ENCODE measurements at regions of chr16 and their contacts with region 1.

Region 1: GRCh38 chr16:2155091-2156021 is at the start of gene TRAF7:
- DNase-seq: peak; percentile 85 to 99 (median 98)
- ATAC-seq: peak; percentile 95
- H3K4me3 ChIP-seq: peak within 1 kb of the TSS; percentile 79
- H3K4me3 Mint-ChIP-seq: peak within 1 kb of the TSS; percentile 85 to 99 (median 94)
- H3K27ac ChIP-seq: peak within 1 kb of the TSS; percentile 80
- H3K27ac Mint-ChIP-seq: peak within 1 kb of the TSS; percentile 78 to 95 (median 91)
- H3K4me1 ChIP-seq: peaks cover 21 to 52% of the 10 kb centered on the region in 2 donors
- H3K4me1 Mint-ChIP-seq: peaks cover 20 to 59% (median 44%) of the 10 kb centered on the region in 7 donors
- H3K27me3 ChIP-seq: no peaks in the 10 kb centered on the region
- H3K27me3 Mint-ChIP-seq: no peaks in the 10 kb centered on the region
- total RNA-seq, gene TRAF7: 30.0 to 58.3 (median 36.7) TPM

Region 2: GRCh38 chr16:1782352-1783091 is 372.8 kb before region 1 on chr16 and contains the starts of genes NUBP2 and SPSB3:
- CTCF ChIA-PET with region 1: no interaction called
- POLR2A ChIA-PET with region 1: interaction called, 7 read pairs
- intact Hi-C with region 1: loop called (anchors 10 kb)
- DNase-seq: peak; percentile 83 to 98 (median 97)
- ATAC-seq: peak; percentile 92
- H3K4me3 ChIP-seq: peak within 1 kb of the TSS; percentile 92
- H3K4me3 Mint-ChIP-seq: peak within 1 kb of the TSS; percentile 90 to 98 (median 94)
- H3K27ac ChIP-seq: peak within 1 kb of the TSS; percentile 76
- H3K27ac Mint-ChIP-seq: peak within 1 kb of the TSS; percentile 77 to 98 (median 93)
- H3K4me1 ChIP-seq: peaks cover 13 to 28% of the 10 kb centered on the region in 2 donors
- H3K4me1 Mint-ChIP-seq: peaks cover 0 to 48% (median 22%) of the 10 kb centered on the region in 7 donors
- H3K27me3 ChIP-seq: no peaks in the 10 kb centered on the region
- H3K27me3 Mint-ChIP-seq: peaks cover 0 to 2% (median 0%) of the 10 kb centered on the region in 5 donors
- total RNA-seq, gene NUBP2: 39.3 to 60.2 (median 48.6) TPM
- total RNA-seq, gene SPSB3: 38.2 to 127 (median 72.3) TPM

Region 3: DNA sequence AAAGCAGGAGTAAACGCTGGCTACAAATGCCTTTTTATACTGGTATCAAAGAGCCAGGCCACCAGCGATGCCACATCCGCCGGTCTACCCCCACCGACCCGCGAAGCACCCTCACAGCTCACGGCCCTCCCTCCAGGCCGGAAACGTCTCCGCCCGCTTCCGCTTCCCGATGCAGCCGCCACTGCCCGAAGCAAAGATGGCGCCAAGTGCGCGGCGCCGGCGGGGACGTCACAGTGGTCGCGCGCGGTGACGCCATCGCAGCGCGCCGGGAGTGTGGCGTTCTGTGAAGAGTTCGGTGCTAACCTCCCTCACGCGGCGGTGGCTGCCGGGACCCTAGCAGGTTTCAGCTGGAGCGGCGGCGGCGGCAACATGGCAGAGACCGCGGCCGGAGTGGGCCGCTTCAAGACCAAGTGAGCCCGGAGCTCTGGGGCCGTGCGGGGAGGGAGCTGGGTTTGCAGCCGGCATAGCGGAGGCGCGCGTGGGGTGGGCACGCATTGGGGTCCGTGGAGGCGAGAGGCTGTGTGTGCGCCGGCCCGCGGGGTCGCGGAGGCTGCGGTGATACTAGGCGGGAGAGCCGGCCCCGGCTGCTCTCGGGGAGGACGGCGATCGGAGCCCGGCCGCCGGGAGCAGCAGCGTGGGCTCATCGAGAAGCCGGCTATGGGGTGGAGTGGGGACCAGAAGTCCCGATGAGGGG is 183.4 kb before region 1 on chr16 and contains the start of gene TBL3:
- CTCF ChIA-PET with region 1: no interaction called
- POLR2A ChIA-PET with region 1: interaction called, 10 read pairs
- intact Hi-C with region 1: no loop called
- DNase-seq: peak; percentile 95 to 99 (median 98)
- ATAC-seq: peak; percentile 97
- H3K4me3 ChIP-seq: peak within 1 kb of the TSS; percentile 81
- H3K4me3 Mint-ChIP-seq: peak within 1 kb of the TSS; percentile 87 to 98 (median 95)
- H3K27ac ChIP-seq: peak within 1 kb of the TSS; percentile 89
- H3K27ac Mint-ChIP-seq: peak within 1 kb of the TSS; percentile 93 to 100 (median 98)
- H3K4me1 ChIP-seq: peaks cover 7 to 18% of the 10 kb centered on the region in 2 donors
- H3K4me1 Mint-ChIP-seq: peaks cover 16 to 27% (median 20%) of the 10 kb centered on the region in 7 donors
- H3K27me3 ChIP-seq: no peaks in the 10 kb centered on the region
- H3K27me3 Mint-ChIP-seq: peaks cover 0 to 4% (median 0%) of the 10 kb centered on the region in 5 donors
- total RNA-seq, gene TBL3: 17.2 to 45.2 (median 27.6) TPM

Region 4: GRCh38 chr16:2009789-2010510 is 145.4 kb before region 1 on chr16 and contains the start of gene ZNF598:
- CTCF ChIA-PET with region 1: interaction called, 3 read pairs
- POLR2A ChIA-PET with region 1: interaction called, 11 read pairs
- intact Hi-C with region 1: loop called in 1 of 2 experiments (anchors 1 kb)
- DNase-seq: peak; percentile 64 to 87 (median 78)
- ATAC-seq: peak; percentile 97
- H3K4me3 ChIP-seq: peak within 1 kb of the TSS; percentile 77
- H3K4me3 Mint-ChIP-seq: peak within 1 kb of the TSS; percentile 87 to 94 (median 92)
- H3K27ac ChIP-seq: peak within 1 kb of the TSS; percentile 91
- H3K27ac Mint-ChIP-seq: peak within 1 kb of the TSS; percentile 85 to 99 (median 97)
- H3K4me1 ChIP-seq: peaks cover 26 to 29% of the 10 kb centered on the region in 2 donors
- H3K4me1 Mint-ChIP-seq: peaks cover 22 to 39% (median 32%) of the 10 kb centered on the region in 7 donors
- H3K27me3 ChIP-seq: no peaks in the 10 kb centered on the region
- H3K27me3 Mint-ChIP-seq: no peaks in the 10 kb centered on the region
- total RNA-seq, gene ZNF598: 44.3 to 63.2 (median 49.8) TPM

Region 5: GRCh38 chr16:2213817-2214720 is 58.7 kb after region 1 on chr16:
- CTCF ChIA-PET with region 1: no interaction called
- POLR2A ChIA-PET with region 1: interaction called, 14 read pairs
- intact Hi-C with region 1: loop called in 1 of 2 experiments (anchors 5 kb)
- DNase-seq: peak in 1 of 9 donors; percentile 60
- ATAC-seq: no peak
- H3K4me3 ChIP-seq: peak overlapping the region; percentile 65
- H3K4me3 Mint-ChIP-seq: peak overlapping the region; percentile 65 to 88 (median 79)
- H3K27ac ChIP-seq: peak overlapping the region; percentile 73
- H3K27ac Mint-ChIP-seq: peak overlapping the region in 3 of 9 donors; percentile 68 to 79 (median 71)
- H3K4me1 ChIP-seq: peaks cover 14 to 16% of the 10 kb centered on the region in 2 donors
- H3K4me1 Mint-ChIP-seq: peaks cover 11 to 21% (median 17%) of the 10 kb centered on the region in 7 donors
- H3K27me3 ChIP-seq: no peaks in the 10 kb centered on the region
- H3K27me3 Mint-ChIP-seq: no peaks in the 10 kb centered on the region

Region 6: DNA sequence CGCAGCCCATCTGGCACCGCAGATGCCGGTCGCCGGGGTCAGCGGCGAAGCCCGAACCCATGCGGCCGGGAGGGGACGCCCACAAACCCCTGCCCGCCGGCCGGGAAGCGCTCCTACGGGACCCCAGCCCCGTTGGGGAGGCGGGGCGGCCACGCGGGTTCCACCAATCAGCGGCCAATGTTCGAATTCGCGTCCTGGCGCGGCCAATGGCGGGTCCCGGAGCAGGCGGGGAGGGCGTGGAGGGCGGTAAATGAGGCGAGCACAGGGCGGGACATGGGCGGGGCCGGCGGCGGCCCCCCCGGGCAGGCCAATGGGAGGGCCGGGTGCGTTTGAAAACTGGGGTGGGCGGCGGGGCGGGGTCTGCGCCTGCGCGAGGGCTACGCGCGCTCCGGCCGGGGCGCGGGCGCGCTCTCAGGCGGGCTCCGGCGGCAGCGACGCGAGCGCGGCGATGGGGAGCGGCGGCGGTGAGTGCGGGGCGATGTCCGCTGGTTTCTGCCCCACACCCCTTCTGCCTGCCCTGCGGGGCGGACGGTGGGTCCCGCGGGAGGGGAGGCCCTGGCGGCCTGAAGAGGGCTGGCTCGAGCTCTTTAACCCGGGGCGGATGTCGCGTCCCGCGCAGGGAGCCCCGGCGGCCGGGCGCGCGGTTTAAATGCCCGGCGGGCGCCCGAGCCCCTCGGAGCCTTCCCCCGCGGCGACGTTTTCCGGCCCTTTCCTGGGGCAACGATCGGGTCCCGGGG is 273.8 kb after region 1 on chr16 and contains the start of gene CCNF:
- CTCF ChIA-PET with region 1: no interaction called
- POLR2A ChIA-PET with region 1: no interaction called
- intact Hi-C with region 1: loop called in 1 of 2 experiments (anchors 5 kb)
- DNase-seq: peak; percentile 87 to 98 (median 92)
- ATAC-seq: peak; percentile 99
- H3K4me3 ChIP-seq: peak within 1 kb of the TSS; percentile 83
- H3K4me3 Mint-ChIP-seq: peak within 1 kb of the TSS; percentile 81 to 97 (median 88)
- H3K27ac ChIP-seq: peak within 1 kb of the TSS; percentile 68
- H3K27ac Mint-ChIP-seq: peak within 1 kb of the TSS; percentile 11 to 88 (median 71)
- H3K4me1 ChIP-seq: peaks cover 5 to 10% of the 10 kb centered on the region in 2 donors
- H3K4me1 Mint-ChIP-seq: peaks cover 12 to 38% (median 19%) of the 10 kb centered on the region in 7 donors
- H3K27me3 ChIP-seq: no peaks in the 10 kb centered on the region
- H3K27me3 Mint-ChIP-seq: no peaks in the 10 kb centered on the region
- total RNA-seq, gene CCNF: 2.6 to 50.1 (median 3.4) TPM

Measured in naive thymus-derived CD4-positive, alpha-beta T cell (primary cell).